Caco-2 (cell line): ENCODE measurements at regions of chr1 and their contacts with region 1.

Region 1: GRCh38 chr1:48061162-48062136 is 64.3 kb upstream of the TRABD2B start:
- DNase-seq: peak; percentile 45 to 69
- H3K4me3 ChIP-seq: no peak overlapping the region
- H3K4me3 Mint-ChIP-seq: no peak overlapping the region
- H3K27ac Mint-ChIP-seq: no peak overlapping the region
- H3K4me1 ChIP-seq: no peaks in the 10 kb centered on the region
- H3K4me1 Mint-ChIP-seq: peaks cover 10% of the 10 kb centered on the region
- H3K27me3 ChIP-seq: no peaks in the 10 kb centered on the region
- H3K27me3 Mint-ChIP-seq: no peaks in the 10 kb centered on the region
- CTCF ChIP-seq: peak; percentile 61 to 62

Region 2: GRCh38 chr1:47963568-47964358 is 97.7 kb before region 1 on chr1:
- CTCF ChIA-PET with region 1: no interaction called
- POLR2A ChIA-PET with region 1: no interaction called
- intact Hi-C with region 1: no loop called
- DNase-seq: no peak
- H3K4me3 ChIP-seq: no peak overlapping the region
- H3K4me3 Mint-ChIP-seq: no peak overlapping the region
- H3K27ac Mint-ChIP-seq: no peak overlapping the region
- H3K4me1 ChIP-seq: no peaks in the 10 kb centered on the region
- H3K4me1 Mint-ChIP-seq: no peaks in the 10 kb centered on the region
- H3K27me3 ChIP-seq: no peaks in the 10 kb centered on the region
- H3K27me3 Mint-ChIP-seq: no peaks in the 10 kb centered on the region
- CTCF ChIP-seq: no peak

Region 3: GRCh38 chr1:47997289-47998200 is 63.9 kb before region 1 on chr1 and contains the start of gene TRABD2B:
- CTCF ChIA-PET with region 1: interaction called, 14 read pairs
- POLR2A ChIA-PET with region 1: no interaction called
- intact Hi-C with region 1: loop called (anchors 1 kb)
- DNase-seq: peak; percentile 53 to 82
- H3K4me3 ChIP-seq: peak within 1 kb of the TSS; percentile 68
- H3K4me3 Mint-ChIP-seq: peak within 1 kb of the TSS; percentile 79
- H3K27ac Mint-ChIP-seq: no peak within 1 kb of the TSS
- H3K4me1 ChIP-seq: no peaks in the 10 kb centered on the region
- H3K4me1 Mint-ChIP-seq: peaks cover 8% of the 10 kb centered on the region
- H3K27me3 ChIP-seq: no peaks in the 10 kb centered on the region
- H3K27me3 Mint-ChIP-seq: peaks cover 17% of the 10 kb centered on the region
- CTCF ChIP-seq: peak; percentile 78 to 89
- total RNA-seq, gene TRABD2B: 0.36 and 0.39 TPM in 2 replicates

Region 4: GRCh38 chr1:48082271-48082962 is 21.0 kb after region 1 on chr1:
- CTCF ChIA-PET with region 1: no interaction called
- POLR2A ChIA-PET with region 1: no interaction called
- intact Hi-C with region 1: no loop called
- DNase-seq: no peak
- H3K4me3 ChIP-seq: no peak overlapping the region
- H3K4me3 Mint-ChIP-seq: no peak overlapping the region
- H3K27ac Mint-ChIP-seq: no peak overlapping the region
- H3K4me1 ChIP-seq: no peaks in the 10 kb centered on the region
- H3K4me1 Mint-ChIP-seq: peaks cover 5% of the 10 kb centered on the region
- H3K27me3 ChIP-seq: no peaks in the 10 kb centered on the region
- H3K27me3 Mint-ChIP-seq: no peaks in the 10 kb centered on the region
- CTCF ChIP-seq: no peak